ENCODE measurements at regions of chr4 and their contacts with region 1.

Region 1: DNA sequence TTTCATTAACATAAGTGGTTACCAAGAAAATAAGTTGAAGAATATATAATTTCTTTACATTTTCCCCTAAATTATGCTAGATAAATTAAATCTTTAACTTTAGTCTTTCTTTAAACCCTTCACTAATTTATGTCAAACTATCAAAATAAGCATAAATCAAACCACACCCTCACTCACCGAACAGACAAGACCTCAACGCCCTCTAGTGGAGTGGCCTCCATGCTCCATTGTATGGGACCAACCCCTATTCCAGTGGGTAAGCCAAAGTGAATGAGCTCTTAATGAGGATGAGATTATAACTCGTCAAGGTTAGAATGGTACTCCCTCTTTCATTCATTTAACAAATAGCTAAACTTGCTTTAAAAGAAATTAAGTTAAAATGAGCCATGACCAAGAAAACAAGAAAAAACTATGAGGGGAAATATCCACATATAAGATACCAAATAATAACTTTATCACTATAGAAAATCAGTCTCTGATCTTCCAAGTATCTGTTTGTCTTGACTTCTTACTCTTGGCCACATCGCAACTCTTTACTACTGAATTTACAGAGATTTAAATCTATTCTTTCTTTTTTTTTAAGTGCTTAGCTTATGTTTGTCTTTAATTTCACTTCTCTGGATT is 15.6 kb upstream of the BBS12 start:
- DNase-seq: peak; percentile 59
- H3K4me3 Mint-ChIP-seq: no peak overlapping the region
- H3K27ac Mint-ChIP-seq: peak overlapping the region; percentile 40
- H3K4me1 Mint-ChIP-seq: peaks cover 46% of the 10 kb centered on the region
- H3K27me3 Mint-ChIP-seq: no peaks in the 10 kb centered on the region

Region 2: GRCh38 chr4:121900132-121900983 is 816.6 kb before region 1 on chr4:
- intact Hi-C with region 1: loop called (anchors 1 kb)
- DNase-seq: peak; percentile 20
- H3K4me3 Mint-ChIP-seq: no peak overlapping the region
- H3K27ac Mint-ChIP-seq: no peak overlapping the region
- H3K4me1 Mint-ChIP-seq: peaks cover 6% of the 10 kb centered on the region
- H3K27me3 Mint-ChIP-seq: peaks cover 13% of the 10 kb centered on the region

Region 3: GRCh38 chr4:122151982-122152710 is 564.8 kb before region 1 on chr4 and contains the start of gene BLTP1:
- intact Hi-C with region 1: loop called (anchors 10 kb)
- DNase-seq: peak; percentile 85
- H3K4me3 Mint-ChIP-seq: peak within 1 kb of the TSS; percentile 98
- H3K27ac Mint-ChIP-seq: peak within 1 kb of the TSS; percentile 92
- H3K4me1 Mint-ChIP-seq: peaks cover 50% of the 10 kb centered on the region
- H3K27me3 Mint-ChIP-seq: no peaks in the 10 kb centered on the region
- total RNA-seq, gene BLTP1: 28.1 and 32.6 TPM in 2 replicates

Region 4: GRCh38 chr4:122602277-122603142 is 114.4 kb before region 1 on chr4:
- intact Hi-C with region 1: loop called (anchors 1 kb)
- DNase-seq: no peak
- H3K4me3 Mint-ChIP-seq: peak overlapping the region; percentile 35
- H3K27ac Mint-ChIP-seq: peak overlapping the region; percentile 31
- H3K4me1 Mint-ChIP-seq: peaks cover 18% of the 10 kb centered on the region
- H3K27me3 Mint-ChIP-seq: peaks cover 16% of the 10 kb centered on the region

Region 5: GRCh38 chr4:122700178-122700725 is 16.7 kb before region 1 on chr4:
- intact Hi-C with region 1: loop called (anchors 1 kb)
- DNase-seq: no peak
- H3K4me3 Mint-ChIP-seq: peak overlapping the region; percentile 78
- H3K27ac Mint-ChIP-seq: peak overlapping the region; percentile 79
- H3K4me1 Mint-ChIP-seq: peaks cover 51% of the 10 kb centered on the region
- H3K27me3 Mint-ChIP-seq: peaks cover 11% of the 10 kb centered on the region

Measured in activated T-helper 2 cell treated with anti-CD3 and anti-CD28 coated beads, Interferon-gamma antibody, Interleukin-2, Interleukin-4, amounts not matched to agents 10 μg/mL and 5 μg/mL and 100 μg/mL, durations not matched to agents 14 hours and 24 hours and 36 hours (primary cell).